ENCODE measurements at regions of chr16 and their contacts with region 1.

Region 1: GRCh38 chr16:74666425-74667254 is at the start of gene RFWD3:
- DNase-seq: peak; percentile 91 to 99 (median 94)
- ATAC-seq: peak; percentile 99
- H3K4me3 ChIP-seq: peak within 1 kb of the TSS; percentile 93
- H3K4me3 Mint-ChIP-seq: peak within 1 kb of the TSS; percentile 99
- H3K27ac ChIP-seq: peak within 1 kb of the TSS; percentile 69 to 72
- H3K27ac Mint-ChIP-seq: peak within 1 kb of the TSS; percentile 95
- H3K4me1 ChIP-seq: peaks cover 38% of the 10 kb centered on the region
- H3K4me1 Mint-ChIP-seq: peaks cover 44% of the 10 kb centered on the region
- H3K27me3 ChIP-seq: no peaks in the 10 kb centered on the region
- H3K27me3 Mint-ChIP-seq: no peaks in the 10 kb centered on the region
- CTCF ChIP-seq: no peak
- total RNA-seq, gene RFWD3: 44.9 to 47.0 TPM

Region 2: GRCh38 chr16:74606521-74607310 is 59.9 kb before region 1 on chr16 and contains the start of gene GLG1:
- CTCF ChIA-PET with region 1: interaction called, 5 read pairs
- POLR2A ChIA-PET with region 1: interaction called, 24 read pairs
- intact Hi-C with region 1: loop called (anchors 1 to 2 kb)
- DNase-seq: peak; percentile 82 to 96 (median 88)
- ATAC-seq: peak; percentile 88
- H3K4me3 ChIP-seq: peak within 1 kb of the TSS; percentile 92
- H3K4me3 Mint-ChIP-seq: peak within 1 kb of the TSS; percentile 95
- H3K27ac ChIP-seq: peak within 1 kb of the TSS; percentile 85 to 91
- H3K27ac Mint-ChIP-seq: peak within 1 kb of the TSS; percentile 95
- H3K4me1 ChIP-seq: peaks cover 62% of the 10 kb centered on the region
- H3K4me1 Mint-ChIP-seq: peaks cover 62% of the 10 kb centered on the region
- H3K27me3 ChIP-seq: no peaks in the 10 kb centered on the region
- H3K27me3 Mint-ChIP-seq: no peaks in the 10 kb centered on the region
- CTCF ChIP-seq: no peak
- total RNA-seq, gene GLG1: 110 to 114 TPM

Region 3: GRCh38 chr16:75148311-75149195 is 481.9 kb after region 1 on chr16 and contains the start of gene ZFP1:
- CTCF ChIA-PET with region 1: no interaction called
- POLR2A ChIA-PET with region 1: no interaction called
- intact Hi-C with region 1: loop called in 1 of 2 experiments (anchors 5 kb)
- DNase-seq: peak; percentile 91 to 96 (median 93)
- ATAC-seq: peak; percentile 91
- H3K4me3 ChIP-seq: peak within 1 kb of the TSS; percentile 82
- H3K4me3 Mint-ChIP-seq: peak within 1 kb of the TSS; percentile 94
- H3K27ac ChIP-seq: peak within 1 kb of the TSS; percentile 80 to 88
- H3K27ac Mint-ChIP-seq: peak within 1 kb of the TSS; percentile 88
- H3K4me1 ChIP-seq: peaks cover 9% of the 10 kb centered on the region
- H3K4me1 Mint-ChIP-seq: peaks cover 22% of the 10 kb centered on the region
- H3K27me3 ChIP-seq: no peaks in the 10 kb centered on the region
- H3K27me3 Mint-ChIP-seq: no peaks in the 10 kb centered on the region
- CTCF ChIP-seq: no peak
- total RNA-seq, gene ZFP1: 6.2 to 7.5 TPM

Region 4: DNA sequence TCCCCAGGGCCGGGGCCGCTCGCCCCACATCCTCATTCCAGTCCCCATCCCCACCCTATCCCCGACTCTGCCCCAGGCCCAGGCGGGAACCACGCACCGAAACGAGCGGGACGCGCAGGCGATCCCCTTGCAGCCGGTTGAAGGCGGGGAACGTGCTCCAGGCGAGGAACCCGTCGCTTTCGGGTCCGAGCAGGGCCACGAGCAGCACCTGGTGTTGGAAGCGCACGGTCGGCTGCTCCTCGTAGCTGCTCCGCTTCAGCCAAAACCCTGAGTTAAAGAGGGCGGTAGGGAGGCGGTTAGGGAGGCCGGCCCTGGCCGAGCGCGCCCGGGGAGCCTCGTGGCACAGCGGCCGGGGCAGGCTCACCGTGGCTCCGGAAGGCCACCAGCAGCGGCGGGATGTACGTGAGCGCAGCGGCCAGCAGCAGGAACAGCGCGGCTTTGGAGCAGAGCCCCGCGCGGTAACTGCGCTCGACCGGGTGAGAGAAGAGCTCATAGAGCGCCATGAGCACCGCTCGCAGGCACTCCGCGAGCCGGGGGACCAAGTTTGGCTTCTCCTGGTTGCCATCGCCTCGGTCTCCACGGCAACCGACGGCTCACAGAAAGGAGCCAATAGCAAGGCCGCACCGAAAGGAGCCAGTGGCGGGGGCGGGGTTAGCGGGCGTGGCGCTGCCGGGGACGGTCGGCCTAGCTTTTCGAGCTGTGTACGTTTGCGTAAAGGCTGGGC is 889.2 kb after region 1 on chr16 and contains the start of gene TMEM231:
- CTCF ChIA-PET with region 1: no interaction called
- POLR2A ChIA-PET with region 1: no interaction called
- intact Hi-C with region 1: loop called in 1 of 2 experiments (anchors 5 kb)
- DNase-seq: peak; percentile 95 to 99 (median 97)
- ATAC-seq: peak; percentile 97
- H3K4me3 ChIP-seq: peak within 1 kb of the TSS; percentile 74
- H3K4me3 Mint-ChIP-seq: peak within 1 kb of the TSS; percentile 88
- H3K27ac ChIP-seq: peak within 1 kb of the TSS; percentile 58 to 82
- H3K27ac Mint-ChIP-seq: peak within 1 kb of the TSS; percentile 65
- H3K4me1 ChIP-seq: peaks cover 18% of the 10 kb centered on the region
- H3K4me1 Mint-ChIP-seq: peaks cover 13% of the 10 kb centered on the region
- H3K27me3 ChIP-seq: peaks cover 0 to 3% of the 10 kb centered on the region in 2 experiments
- H3K27me3 Mint-ChIP-seq: peaks cover 8% of the 10 kb centered on the region
- CTCF ChIP-seq: no peak
- total RNA-seq, gene TMEM231: 2.5 TPM

Measured in CD4-positive, alpha-beta T cell (primary cell).